A673 (cell line): ENCODE measurements at regions of chr3 and their contacts with region 1.

Region 1: GRCh38 chr3:193572426-193572908 is 17.8 kb upstream of the ATP13A4 start:
- DNase-seq: peak; percentile 79
- H3K4me3 ChIP-seq: no peak overlapping the region
- H3K27ac ChIP-seq: no peak overlapping the region
- H3K4me1 ChIP-seq: peaks cover 5% of the 10 kb centered on the region
- H3K27me3 ChIP-seq: no peaks in the 10 kb centered on the region
- CTCF ChIP-seq: peak; percentile 90

Region 2: GRCh38 chr3:192566706-192567290 is 1005.7 kb before region 1 on chr3:
- CTCF ChIA-PET with region 1: interaction called, 4 read pairs
- POLR2A ChIA-PET with region 1: no interaction called
- intact Hi-C with region 1: loop called (anchors 5 kb)
- DNase-seq: peak; percentile 76
- H3K4me3 ChIP-seq: no peak overlapping the region
- H3K27ac ChIP-seq: no peak overlapping the region
- H3K4me1 ChIP-seq: peaks cover 6% of the 10 kb centered on the region
- H3K27me3 ChIP-seq: peaks cover 6% of the 10 kb centered on the region
- CTCF ChIP-seq: peak; percentile 80

Region 3: GRCh38 chr3:192816351-192816750 is 756.1 kb before region 1 on chr3:
- CTCF ChIA-PET with region 1: interaction called, 8 read pairs
- POLR2A ChIA-PET with region 1: no interaction called
- intact Hi-C with region 1: loop called (anchors 2 kb)
- DNase-seq: peak; percentile 71
- H3K4me3 ChIP-seq: no peak overlapping the region
- H3K27ac ChIP-seq: no peak overlapping the region
- H3K4me1 ChIP-seq: no peaks in the 10 kb centered on the region
- H3K27me3 ChIP-seq: no peaks in the 10 kb centered on the region
- CTCF ChIP-seq: peak; percentile 73

Region 4: DNA sequence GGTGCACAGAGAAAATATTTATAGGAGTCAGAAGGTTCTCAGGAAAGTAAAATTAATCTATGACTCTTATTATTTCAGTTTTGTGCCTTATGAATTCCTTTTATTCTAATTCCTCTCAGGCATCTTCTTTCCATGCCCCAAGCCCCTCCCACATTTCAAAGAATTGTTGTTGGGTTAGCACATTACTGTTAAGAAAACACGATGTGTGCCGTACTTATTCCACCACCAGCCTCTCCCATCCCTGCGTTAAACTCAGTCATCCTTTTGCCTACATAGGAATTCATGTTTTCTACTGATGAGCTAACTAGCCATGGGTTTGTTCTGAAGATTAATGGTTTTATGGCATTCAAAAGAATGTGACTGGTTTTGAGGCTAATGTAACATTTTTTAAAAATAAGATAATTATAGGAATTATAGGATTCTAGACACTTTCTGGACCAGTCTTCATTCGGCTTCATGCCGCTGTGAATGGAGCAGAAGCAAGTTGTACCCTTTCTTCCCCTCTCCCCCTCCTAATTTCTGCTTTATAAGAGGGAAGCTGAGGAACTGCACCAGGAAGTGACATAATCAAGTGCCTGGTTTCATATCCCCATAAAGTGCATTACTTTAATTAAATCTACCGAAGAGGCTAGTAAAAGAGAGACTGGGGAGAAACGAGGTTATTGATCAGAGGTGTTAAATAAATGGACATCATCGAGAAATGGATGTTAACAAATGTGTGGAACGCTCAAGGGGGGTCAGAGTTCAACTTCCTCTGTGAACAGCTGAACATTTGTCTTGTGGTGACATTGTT is 642.5 kb before region 1 on chr3:
- CTCF ChIA-PET with region 1: no interaction called
- POLR2A ChIA-PET with region 1: no interaction called
- intact Hi-C with region 1: no loop called
- DNase-seq: no peak
- H3K4me3 ChIP-seq: no peak overlapping the region
- H3K27ac ChIP-seq: no peak overlapping the region
- H3K4me1 ChIP-seq: peaks cover 9% of the 10 kb centered on the region
- H3K27me3 ChIP-seq: no peaks in the 10 kb centered on the region
- CTCF ChIP-seq: no peak

Region 5: GRCh38 chr3:193040836-193041672 is 531.4 kb before region 1 on chr3:
- CTCF ChIA-PET with region 1: no interaction called
- POLR2A ChIA-PET with region 1: no interaction called
- intact Hi-C with region 1: loop called (anchors 10 kb)
- DNase-seq: peak; percentile 54
- H3K4me3 ChIP-seq: no peak overlapping the region
- H3K27ac ChIP-seq: no peak overlapping the region
- H3K4me1 ChIP-seq: no peaks in the 10 kb centered on the region
- H3K27me3 ChIP-seq: no peaks in the 10 kb centered on the region
- CTCF ChIP-seq: peak; percentile 67

Region 6: DNA sequence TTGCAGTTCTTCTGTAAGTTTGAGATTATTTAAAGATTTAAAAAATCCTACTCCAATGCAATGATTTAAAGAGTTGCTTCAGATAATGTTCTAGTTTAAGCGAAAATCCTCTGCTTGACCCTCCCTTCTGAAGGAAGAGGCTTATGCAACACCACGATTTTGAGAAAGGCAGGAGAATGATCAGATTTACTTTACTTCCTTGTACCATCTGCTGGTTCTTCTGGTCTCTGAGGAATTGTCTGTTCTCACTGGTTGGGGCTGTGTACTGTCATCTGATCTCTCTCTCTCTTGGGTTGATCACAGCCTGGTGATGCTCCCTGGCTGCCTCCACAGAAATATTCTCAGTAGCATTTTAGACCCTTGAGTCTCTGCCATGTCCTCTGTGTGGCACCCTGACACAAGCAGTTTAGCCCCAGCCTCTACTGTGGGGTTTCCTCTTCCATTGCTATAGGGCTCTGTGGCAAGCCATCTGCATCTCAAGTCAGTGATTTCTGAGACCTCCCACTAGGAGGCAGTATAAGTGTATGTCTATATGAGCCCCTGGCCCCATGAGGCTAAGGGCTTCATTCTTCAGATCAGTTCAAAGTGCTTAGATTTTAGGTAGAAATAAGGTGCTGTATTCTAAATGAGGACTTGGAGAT is 382.2 kb before region 1 on chr3:
- CTCF ChIA-PET with region 1: no interaction called
- POLR2A ChIA-PET with region 1: no interaction called
- intact Hi-C with region 1: loop called (anchors 2 kb)
- DNase-seq: peak; percentile 62
- H3K4me3 ChIP-seq: no peak overlapping the region
- H3K27ac ChIP-seq: no peak overlapping the region
- H3K4me1 ChIP-seq: no peaks in the 10 kb centered on the region
- H3K27me3 ChIP-seq: no peaks in the 10 kb centered on the region
- CTCF ChIP-seq: peak; percentile 69

Region 7: GRCh38 chr3:193465992-193466608 is 106.4 kb before region 1 on chr3:
- CTCF ChIA-PET with region 1: no interaction called
- POLR2A ChIA-PET with region 1: no interaction called
- intact Hi-C with region 1: loop called (anchors 2 kb)
- DNase-seq: no peak
- H3K4me3 ChIP-seq: no peak overlapping the region
- H3K27ac ChIP-seq: no peak overlapping the region
- H3K4me1 ChIP-seq: peaks cover 6% of the 10 kb centered on the region
- H3K27me3 ChIP-seq: no peaks in the 10 kb centered on the region
- CTCF ChIP-seq: no peak